HepG2 (cell line): ENCODE measurements at regions of chr1 and their contacts with region 1.

Region 1: DNA sequence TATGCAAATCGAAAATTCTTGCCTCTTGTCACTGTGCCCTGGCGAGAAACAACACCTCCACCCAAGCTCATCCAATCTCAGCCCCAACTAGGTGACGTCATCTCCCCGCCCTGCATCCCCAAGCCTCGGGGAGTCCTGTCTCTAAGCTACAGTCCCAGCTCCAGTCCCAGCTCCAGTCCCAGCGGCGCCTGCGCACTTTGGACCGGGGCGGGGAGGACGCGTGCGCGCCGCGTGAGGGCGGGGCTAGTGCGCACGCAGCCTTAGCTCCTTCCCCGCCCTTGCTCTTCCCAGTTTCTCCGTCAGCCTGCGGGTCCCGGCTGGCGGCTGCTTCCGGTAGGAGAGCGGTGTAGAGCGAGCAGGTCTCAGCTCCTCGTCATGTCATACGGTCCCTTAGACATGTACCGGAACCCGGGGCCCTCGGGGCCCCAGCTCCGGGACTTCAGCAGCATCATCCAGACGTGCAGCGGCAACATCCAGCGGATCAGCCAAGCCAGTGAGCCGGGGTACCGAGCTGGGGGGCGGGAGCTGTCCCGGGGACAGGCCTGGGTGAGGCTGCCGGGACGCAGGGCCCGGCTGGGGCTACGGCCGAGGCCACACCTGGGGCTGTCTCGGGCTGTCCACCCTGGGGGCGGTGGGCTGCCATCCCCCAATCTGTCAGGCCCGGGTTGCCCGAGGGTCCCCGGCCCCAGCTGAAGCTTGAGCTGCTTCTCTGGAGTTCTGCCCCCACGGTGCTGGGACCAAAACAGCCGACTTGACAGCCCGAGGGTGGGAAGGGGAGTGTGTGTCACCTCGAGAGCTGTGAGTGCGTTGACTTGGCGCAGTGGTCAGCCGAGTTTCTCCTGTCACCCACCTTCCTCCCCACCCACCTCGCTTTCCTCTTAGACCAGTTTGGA is at the start of gene STX12:
- DNase-seq: peak; percentile 95
- ATAC-seq: peak; percentile 96
- H3K4me3 ChIP-seq: peak within 1 kb of the TSS; percentile 77 to 98 (median 88)
- H3K27ac ChIP-seq: peak within 1 kb of the TSS; percentile 55
- H3K4me1 ChIP-seq: peaks cover 36% of the 10 kb centered on the region
- H3K27me3 ChIP-seq: no peaks in the 10 kb centered on the region; a peak in 1 of 5 replicates
- CTCF ChIP-seq: no peak
- EP300 ChIP-seq: no peak
- POLR2A ChIP-seq: peak; percentile 81 to 88
- RAD21 ChIP-seq: 0 out of 2 replicates have a peak, but pooled peaks have one; percentile 28
- total RNA-seq, gene STX12: 16.3 and 19.7 TPM in 2 replicates

Region 2: DNA sequence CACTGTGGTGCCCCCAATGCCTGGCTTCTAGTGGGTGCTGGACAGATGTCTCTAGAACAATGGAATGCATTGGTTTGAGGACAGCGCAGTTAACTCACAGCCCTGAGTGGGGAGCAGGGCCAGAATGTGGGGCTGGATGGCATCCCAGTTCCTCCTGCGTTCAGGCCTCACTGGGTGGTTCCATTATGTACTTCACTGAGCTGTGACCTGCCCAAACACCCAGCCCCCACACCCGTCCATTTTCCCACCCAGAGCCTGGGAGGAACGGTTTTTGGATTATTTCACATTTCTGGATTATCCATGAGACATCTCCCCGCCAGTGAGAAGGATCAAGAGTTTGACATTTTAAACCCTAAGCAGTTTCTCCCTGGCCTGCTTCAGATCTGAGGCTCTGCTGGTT is 227.9 kb before region 1 on chr1:
- CTCF ChIA-PET with region 1: no interaction called
- POLR2A ChIA-PET with region 1: no interaction called
- in situ Hi-C with region 1: no loop called
- intact Hi-C with region 1: no loop called
- DNase-seq: no peak
- ATAC-seq: no peak
- H3K4me3 ChIP-seq: no peak overlapping the region
- H3K27ac ChIP-seq: no peak overlapping the region
- H3K4me1 ChIP-seq: peaks cover 50% of the 10 kb centered on the region
- H3K27me3 ChIP-seq: no peaks in the 10 kb centered on the region
- CTCF ChIP-seq: no peak
- EP300 ChIP-seq: no peak
- POLR2A ChIP-seq: no peak
- RAD21 ChIP-seq: no peak

Region 3: GRCh38 chr1:27671964-27672749 is 101.0 kb before region 1 on chr1 and contains the start of gene IFI6:
- CTCF ChIA-PET with region 1: no interaction called
- POLR2A ChIA-PET with region 1: interaction called, 5 read pairs
- in situ Hi-C with region 1: no loop called
- intact Hi-C with region 1: loop called (anchors 5 kb)
- DNase-seq: peak; percentile 96
- ATAC-seq: peak; percentile 98
- H3K4me3 ChIP-seq: peak within 1 kb of the TSS; percentile 48 to 70 (median 61)
- H3K27ac ChIP-seq: peak within 1 kb of the TSS; percentile 58
- H3K4me1 ChIP-seq: peaks cover 40% of the 10 kb centered on the region
- H3K27me3 ChIP-seq: no peaks in the 10 kb centered on the region
- CTCF ChIP-seq: peak; percentile 50
- EP300 ChIP-seq: no peak
- POLR2A ChIP-seq: peak; percentile 56 to 73
- RAD21 ChIP-seq: peak; percentile 29; the same call in 1 of the 2 replicates
- total RNA-seq, gene IFI6: 6.1 and 13.2 TPM in 2 replicates

Region 4: GRCh38 chr1:27725374-27726173 is 47.6 kb before region 1 on chr1 and contains the start of gene FAM76A:
- CTCF ChIA-PET with region 1: no interaction called
- POLR2A ChIA-PET with region 1: interaction called, 27 read pairs
- in situ Hi-C with region 1: no loop called
- intact Hi-C with region 1: loop called (anchors 2 kb)
- DNase-seq: peak; percentile 97
- ATAC-seq: peak; percentile 94
- H3K4me3 ChIP-seq: peak within 1 kb of the TSS; percentile 84 to 99 (median 91)
- H3K27ac ChIP-seq: peak within 1 kb of the TSS; percentile 99
- H3K4me1 ChIP-seq: peaks cover 33% of the 10 kb centered on the region
- H3K27me3 ChIP-seq: no peaks in the 10 kb centered on the region
- CTCF ChIP-seq: peak; percentile 92
- EP300 ChIP-seq: peak in 1 of 2 experiments; percentile 31; a peak in 1 of 4 replicates
- POLR2A ChIP-seq: peak; percentile 57 to 70
- RAD21 ChIP-seq: 0 out of 2 replicates have a peak, but pooled peaks have one; percentile 1
- total RNA-seq, gene FAM76A: 15.7 and 18.8 TPM in 2 replicates

Region 5: DNA sequence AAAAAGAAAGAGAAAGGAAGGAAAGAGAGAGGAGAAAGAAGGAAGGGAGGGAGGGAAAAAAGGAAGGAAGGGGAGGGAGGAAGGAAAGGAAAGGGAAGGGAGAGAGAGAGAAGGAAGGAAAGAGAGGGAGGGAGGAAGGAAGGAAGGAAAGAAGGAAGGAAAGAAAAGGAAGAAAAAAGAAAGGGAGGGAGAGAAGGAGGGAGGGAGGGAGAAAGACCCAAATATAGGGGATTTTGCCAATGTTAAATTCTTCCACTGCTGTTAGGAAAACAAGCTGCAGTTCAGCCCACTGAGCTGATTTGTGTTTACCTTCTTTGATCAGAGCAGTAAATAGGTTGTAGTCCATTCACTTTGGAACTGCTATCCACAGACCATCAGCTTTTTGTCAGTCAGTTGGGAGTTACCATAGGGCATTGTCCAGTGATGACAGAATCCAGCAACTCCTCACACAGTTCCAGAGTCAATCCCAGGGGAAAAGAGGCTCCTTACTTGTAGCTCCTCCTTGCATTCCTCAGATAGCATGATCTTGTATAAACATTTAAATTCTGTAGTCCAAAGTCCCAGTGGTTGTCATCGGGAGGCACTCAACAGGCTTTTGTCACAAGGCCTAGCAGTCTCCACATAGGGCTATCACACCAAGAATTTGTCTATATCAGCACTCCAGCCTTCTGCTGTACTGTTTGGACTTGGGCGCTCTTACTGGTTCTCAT is 43.9 kb after region 1 on chr1:
- CTCF ChIA-PET with region 1: no interaction called
- POLR2A ChIA-PET with region 1: interaction called, 26 read pairs
- in situ Hi-C with region 1: no loop called
- intact Hi-C with region 1: no loop called
- DNase-seq: peak; percentile 98
- ATAC-seq: peak; percentile 99
- H3K4me3 ChIP-seq: peak overlapping the region in 1 of 3 experiments; percentile 35; a peak in 1 of 6 replicates
- H3K27ac ChIP-seq: peak overlapping the region; percentile 91
- H3K4me1 ChIP-seq: peaks cover 31% of the 10 kb centered on the region
- H3K27me3 ChIP-seq: no peaks in the 10 kb centered on the region
- CTCF ChIP-seq: no peak
- EP300 ChIP-seq: peak in 1 of 2 experiments; percentile 54; a peak in 2 of 4 replicates
- POLR2A ChIP-seq: peak in 1 of 2 experiments; percentile 47; a peak in 1 of 4 replicates
- RAD21 ChIP-seq: no peak

Region 6: DNA sequence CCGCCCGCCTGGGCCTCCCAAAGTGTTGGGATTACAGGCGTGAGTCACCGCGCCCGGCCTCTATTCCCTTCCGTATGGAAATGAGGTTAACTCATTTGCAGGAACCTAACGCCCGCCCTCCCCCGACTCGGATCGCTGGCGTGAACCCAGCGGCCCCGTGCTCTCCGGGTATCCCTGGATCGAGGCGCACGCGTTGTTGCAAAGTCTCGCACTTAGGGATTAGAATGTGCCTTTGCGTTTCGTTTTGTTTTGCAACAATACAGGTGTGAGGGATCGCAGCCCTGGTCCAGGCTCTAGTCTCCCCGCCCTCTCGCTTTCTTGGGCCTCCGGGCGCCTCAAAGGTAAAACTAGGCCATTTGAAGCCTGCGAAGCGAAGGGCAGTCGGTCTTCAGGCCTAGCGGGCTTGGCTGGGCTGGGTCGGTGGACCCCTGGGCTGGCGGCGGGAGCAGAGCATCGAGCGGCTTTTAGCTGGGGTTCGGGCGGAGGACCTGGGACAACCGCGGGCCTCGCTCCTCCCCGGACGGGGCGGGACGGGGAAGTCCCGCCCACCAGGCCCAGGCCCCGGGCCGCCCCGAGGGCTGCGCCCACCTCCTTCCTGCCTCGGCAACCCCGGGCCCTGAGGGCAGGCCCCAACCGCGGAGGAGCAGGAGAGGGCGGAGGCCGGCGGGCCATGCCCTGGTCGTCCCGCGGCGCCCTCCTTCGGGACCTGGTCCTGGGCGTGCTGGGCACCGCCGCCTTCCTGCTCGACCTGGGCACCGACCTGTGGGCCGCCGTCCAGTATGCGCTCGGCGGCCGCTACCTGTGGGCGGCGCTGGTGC is 186.4 kb after region 1 on chr1 and contains the start of gene XKR8:
- CTCF ChIA-PET with region 1: no interaction called
- POLR2A ChIA-PET with region 1: no interaction called
- in situ Hi-C with region 1: no loop called
- intact Hi-C with region 1: no loop called
- DNase-seq: peak; percentile 23
- ATAC-seq: peak; percentile 87
- H3K4me3 ChIP-seq: peak within 1 kb of the TSS; percentile 52 to 74 (median 73); a peak in 5 of 6 replicates
- H3K27ac ChIP-seq: peak within 1 kb of the TSS; percentile 17
- H3K4me1 ChIP-seq: peaks cover 33% of the 10 kb centered on the region
- H3K27me3 ChIP-seq: no peaks in the 10 kb centered on the region; a peak in 1 of 5 replicates
- CTCF ChIP-seq: peak; percentile 70
- EP300 ChIP-seq: no peak
- POLR2A ChIP-seq: peak in 1 of 2 experiments; percentile 65; a peak in 3 of 4 replicates
- RAD21 ChIP-seq: peak; percentile 58; the same call in 1 of the 2 replicates
- total RNA-seq, gene XKR8: 2.9 and 5.4 TPM in 2 replicates